ENCODE measurements at regions of chr20 and their contacts with region 1.

Region 1: GRCh38 chr20:63198606-63199005 is 17.3 kb downstream of the YTHDF1 start:
- DNase-seq: no peak
- ATAC-seq: no peak
- H3K4me3 ChIP-seq: no peak overlapping the region
- H3K27ac ChIP-seq: no peak overlapping the region
- H3K4me1 ChIP-seq: 0 out of 2 replicates have a peak, but pooled peaks cover 3% of the 10 kb centered on the region
- H3K27me3 ChIP-seq: no peaks in the 10 kb centered on the region
- CTCF ChIP-seq: no peak

Region 2: GRCh38 chr20:62957136-62958117 is 241.2 kb before region 1 on chr20:
- CTCF ChIA-PET with region 1: no interaction called
- POLR2A ChIA-PET with region 1: interaction called, 11 read pairs
- in situ Hi-C with region 1: no loop called
- intact Hi-C with region 1: no loop called
- DNase-seq: no peak
- ATAC-seq: no peak
- H3K4me3 ChIP-seq: no peak overlapping the region
- H3K27ac ChIP-seq: no peak overlapping the region
- H3K4me1 ChIP-seq: peaks cover 9% of the 10 kb centered on the region; the same call in 1 of the 2 replicates
- H3K27me3 ChIP-seq: no peaks in the 10 kb centered on the region
- CTCF ChIP-seq: no peak